ENCODE measurements at regions of chr6 and their contacts with region 1.

Region 1: GRCh38 chr6:1396952-1397868 is 7.8 kb downstream of the FOXF2 start:
- DNase-seq: peak in 2 of 3 donors; percentile 76 to 84
- ATAC-seq: peak; percentile 75
- H3K4me3 ChIP-seq: no peak overlapping the region
- H3K4me1 ChIP-seq: no peaks in the 10 kb centered on the region
- CTCF ChIP-seq: peak; percentile 85

Region 2: DNA sequence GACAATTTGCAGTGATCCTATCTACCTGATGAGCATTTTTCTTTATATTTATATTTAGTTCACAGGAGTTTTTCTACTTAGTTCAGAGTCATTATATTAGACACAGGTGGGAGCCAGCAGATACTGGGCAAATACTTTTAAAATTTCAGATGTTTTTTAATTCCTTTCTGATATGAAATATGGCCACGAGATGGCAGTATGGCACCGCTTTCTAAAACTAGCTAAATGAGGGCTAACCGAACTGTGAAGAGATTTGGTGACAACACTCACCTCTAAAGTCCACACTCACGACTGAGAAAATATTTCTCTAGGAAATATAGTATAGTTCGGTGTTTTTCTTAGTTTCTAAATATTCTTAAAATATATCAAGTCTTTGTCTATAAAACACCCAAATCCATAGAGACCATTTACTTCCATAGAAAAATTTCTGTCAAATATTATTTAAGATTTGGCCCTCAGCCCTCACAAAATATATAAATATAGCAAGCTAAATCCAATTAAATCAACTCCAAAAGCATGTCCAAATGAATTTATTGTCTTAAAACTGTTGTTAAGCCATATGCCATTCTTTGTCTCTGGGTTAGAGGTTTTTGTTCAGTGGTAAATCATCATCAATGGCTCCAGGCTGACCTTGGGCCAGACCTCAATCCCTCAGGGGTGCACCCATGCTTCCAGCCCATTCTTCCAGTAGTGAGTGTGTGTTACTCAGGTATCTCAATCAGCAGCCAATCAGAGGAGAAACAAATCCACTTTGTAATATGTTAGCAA is 803.9 kb before region 1 on chr6:
- intact Hi-C with region 1: loop called (anchors 10 kb)
- DNase-seq: peak in 1 of 3 donors; percentile 84
- ATAC-seq: peak; percentile 60
- H3K4me3 ChIP-seq: no peak overlapping the region
- H3K4me1 ChIP-seq: no peaks in the 10 kb centered on the region
- CTCF ChIP-seq: peak; percentile 38

Measured in mucosa of descending colon (tissue), 3 donors.